Panc1 (cell line): ENCODE measurements at regions of chr14 and their contacts with region 1.

Region 1: GRCh38 chr14:32252030-32252670 is 49.1 kb upstream of the RNU6-8 start:
- DNase-seq: peak; percentile 51
- ATAC-seq: peak; percentile 93
- H3K4me3 ChIP-seq: no peak overlapping the region
- H3K27ac ChIP-seq: no peak overlapping the region
- H3K4me1 ChIP-seq: no peaks in the 10 kb centered on the region
- H3K27me3 ChIP-seq: no peaks in the 10 kb centered on the region
- CTCF ChIP-seq: peak; percentile 84

Region 2: GRCh38 chr14:31510222-31510621 is 741.9 kb before region 1 on chr14:
- CTCF ChIA-PET with region 1: interaction called, 7 read pairs
- POLR2A ChIA-PET with region 1: no interaction called
- in situ Hi-C with region 1: no loop called
- intact Hi-C with region 1: loop called (anchors 5 kb)
- DNase-seq: peak; percentile 2
- ATAC-seq: no peak
- H3K4me3 ChIP-seq: no peak overlapping the region
- H3K27ac ChIP-seq: no peak overlapping the region
- H3K4me1 ChIP-seq: no peaks in the 10 kb centered on the region; the same call in 1 of the 2 replicates
- H3K27me3 ChIP-seq: no peaks in the 10 kb centered on the region
- CTCF ChIP-seq: peak; percentile 46; the same call in 1 of the 2 replicates

Region 3: DNA sequence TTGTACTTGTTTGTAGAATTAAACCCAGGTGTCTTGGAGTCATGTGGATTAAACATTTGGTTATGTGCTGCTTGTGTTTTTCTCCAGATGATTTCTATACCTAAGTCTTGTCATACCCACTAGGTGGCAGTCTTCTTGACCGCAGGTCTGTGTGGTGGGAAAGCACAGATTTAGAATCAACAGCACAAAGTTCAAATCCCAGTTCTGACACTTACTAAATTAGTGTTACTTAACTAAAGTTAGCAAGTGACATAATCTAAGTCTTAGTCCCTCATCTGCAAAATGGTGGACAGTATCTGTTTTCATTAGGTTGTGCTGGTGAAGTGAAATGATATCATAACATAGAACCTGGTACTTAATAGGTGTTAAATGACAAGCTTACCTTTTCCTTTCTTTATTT is 326.0 kb before region 1 on chr14:
- CTCF ChIA-PET with region 1: interaction called, 3 read pairs
- POLR2A ChIA-PET with region 1: no interaction called
- in situ Hi-C with region 1: no loop called
- intact Hi-C with region 1: loop called (anchors 5 kb)
- DNase-seq: no peak
- ATAC-seq: peak; percentile 68; the same call in 1 of the 2 replicates
- H3K4me3 ChIP-seq: no peak overlapping the region
- H3K27ac ChIP-seq: no peak overlapping the region
- H3K4me1 ChIP-seq: no peaks in the 10 kb centered on the region
- H3K27me3 ChIP-seq: no peaks in the 10 kb centered on the region
- CTCF ChIP-seq: peak; percentile 62; the same call in 1 of the 2 replicates

Region 4: DNA sequence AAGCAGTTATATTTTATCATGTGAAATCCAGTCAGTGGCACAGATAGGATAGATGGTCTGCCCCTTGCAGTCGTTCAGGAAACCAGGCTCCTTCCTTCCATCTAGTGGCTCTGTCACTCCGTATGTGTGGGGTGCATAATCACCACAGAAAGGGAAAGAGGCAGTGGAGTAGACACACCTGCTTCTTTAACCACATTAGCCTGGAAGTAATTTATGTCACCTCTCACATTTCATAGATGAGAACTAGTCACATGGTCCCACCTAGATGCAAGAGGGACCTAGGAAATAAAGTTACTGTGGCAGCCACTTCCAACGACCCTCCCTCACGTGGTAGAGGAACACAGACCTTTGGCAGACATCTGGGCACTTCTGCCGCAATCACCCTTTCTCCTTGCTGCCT is 34.8 kb before region 1 on chr14:
- CTCF ChIA-PET with region 1: no interaction called
- POLR2A ChIA-PET with region 1: no interaction called
- in situ Hi-C with region 1: no loop called
- intact Hi-C with region 1: no loop called
- DNase-seq: no peak
- ATAC-seq: no peak
- H3K4me3 ChIP-seq: no peak overlapping the region
- H3K27ac ChIP-seq: no peak overlapping the region
- H3K4me1 ChIP-seq: no peaks in the 10 kb centered on the region
- H3K27me3 ChIP-seq: no peaks in the 10 kb centered on the region
- CTCF ChIP-seq: no peak

Region 5: GRCh38 chr14:32393118-32393517 is 141.0 kb after region 1 on chr14:
- CTCF ChIA-PET with region 1: no interaction called
- POLR2A ChIA-PET with region 1: no interaction called
- in situ Hi-C with region 1: no loop called
- intact Hi-C with region 1: no loop called
- DNase-seq: no peak
- ATAC-seq: no peak
- H3K4me3 ChIP-seq: no peak overlapping the region
- H3K27ac ChIP-seq: no peak overlapping the region
- H3K4me1 ChIP-seq: no peaks in the 10 kb centered on the region
- H3K27me3 ChIP-seq: no peaks in the 10 kb centered on the region
- CTCF ChIP-seq: no peak

Region 6: DNA sequence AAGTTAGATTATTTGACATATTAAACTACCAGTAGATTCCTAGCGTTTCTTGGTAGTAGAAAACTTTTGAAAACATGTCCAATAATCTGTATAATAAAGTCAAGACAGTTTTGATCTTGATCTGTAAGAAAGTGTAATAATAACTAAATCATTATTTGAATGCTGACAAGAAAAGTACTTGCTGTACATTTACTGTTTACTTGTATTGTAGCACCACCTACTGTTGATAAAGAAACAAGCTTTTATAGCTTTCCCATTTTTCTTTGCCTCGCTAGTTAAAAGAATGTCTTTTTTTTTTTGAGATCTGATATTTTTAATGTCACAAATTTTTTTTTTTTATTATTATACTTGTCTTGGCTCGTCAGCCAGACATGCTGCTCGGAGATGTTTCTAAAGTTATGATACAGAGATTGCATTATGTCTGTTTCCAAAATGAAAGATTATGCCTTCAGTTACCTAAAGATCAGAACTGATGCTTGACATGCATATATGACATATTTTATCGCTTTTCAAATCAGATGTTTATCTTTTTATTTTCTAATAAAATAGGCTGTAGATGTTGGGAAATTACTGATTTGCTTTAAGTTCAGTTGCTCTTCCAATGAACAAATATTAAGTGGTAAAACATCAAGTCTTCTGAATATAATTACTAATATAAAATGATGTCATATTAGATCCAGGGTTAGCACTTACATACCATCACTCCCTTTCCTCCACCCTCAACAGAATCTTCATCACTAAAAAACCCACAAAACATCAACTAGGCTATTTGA is 217.4 kb after region 1 on chr14:
- CTCF ChIA-PET with region 1: no interaction called
- POLR2A ChIA-PET with region 1: no interaction called
- in situ Hi-C with region 1: no loop called
- intact Hi-C with region 1: loop called (anchors 5 kb)
- DNase-seq: peak; percentile 5
- ATAC-seq: no peak
- H3K4me3 ChIP-seq: no peak overlapping the region
- H3K27ac ChIP-seq: no peak overlapping the region
- H3K4me1 ChIP-seq: no peaks in the 10 kb centered on the region
- H3K27me3 ChIP-seq: peaks cover 3% of the 10 kb centered on the region; the same call in 1 of the 2 replicates
- CTCF ChIP-seq: peak; percentile 28; the same call in 1 of the 2 replicates